ENCODE measurements at regions of chr5 and their contacts with region 1.

Region 1: DNA sequence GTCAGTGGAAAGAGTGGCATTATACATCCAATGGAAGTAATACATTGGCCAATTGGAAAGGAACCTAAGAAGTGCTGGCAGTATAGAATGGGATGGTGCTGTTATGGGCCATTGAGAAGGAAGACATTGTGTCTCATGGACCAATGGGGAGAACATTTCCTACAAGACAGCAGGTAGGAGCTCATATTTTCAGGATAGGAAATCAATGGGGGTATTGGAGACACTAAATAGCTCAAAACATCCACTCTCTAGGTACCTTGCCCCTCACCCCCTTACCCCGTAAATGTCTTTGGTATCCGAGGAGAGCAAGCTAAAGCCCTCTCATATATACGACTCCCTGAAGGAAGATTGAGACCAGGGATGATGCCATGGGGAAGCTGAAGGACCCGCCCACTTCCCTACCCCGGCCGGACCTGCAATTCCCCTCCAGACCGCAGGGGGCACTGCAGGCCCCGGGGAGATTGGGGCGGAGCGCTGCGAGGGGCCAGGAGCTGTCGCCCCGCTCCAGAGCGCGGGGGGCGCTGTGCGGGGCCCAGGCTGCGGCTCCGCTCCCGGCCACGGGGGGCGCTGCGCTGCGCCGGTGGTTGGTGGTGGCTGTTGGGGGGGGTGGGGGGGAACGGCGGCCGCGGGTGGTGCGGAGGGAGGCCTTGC is at the start of gene KDM3B:
- DNase-seq: peak; percentile 79
- H3K4me3 ChIP-seq: peak within 1 kb of the TSS; percentile 58 to 95 (median 78)
- H3K27ac ChIP-seq: peak within 1 kb of the TSS; percentile 65
- H3K4me1 ChIP-seq: peaks cover 14% of the 10 kb centered on the region
- H3K27me3 ChIP-seq: no peaks in the 10 kb centered on the region
- CTCF ChIP-seq: peak; percentile 99 to 100
- POLR2A ChIP-seq: peak; percentile 41
- total RNA-seq, gene KDM3B: 52.6 and 55.7 TPM in 2 replicates

Region 2: DNA sequence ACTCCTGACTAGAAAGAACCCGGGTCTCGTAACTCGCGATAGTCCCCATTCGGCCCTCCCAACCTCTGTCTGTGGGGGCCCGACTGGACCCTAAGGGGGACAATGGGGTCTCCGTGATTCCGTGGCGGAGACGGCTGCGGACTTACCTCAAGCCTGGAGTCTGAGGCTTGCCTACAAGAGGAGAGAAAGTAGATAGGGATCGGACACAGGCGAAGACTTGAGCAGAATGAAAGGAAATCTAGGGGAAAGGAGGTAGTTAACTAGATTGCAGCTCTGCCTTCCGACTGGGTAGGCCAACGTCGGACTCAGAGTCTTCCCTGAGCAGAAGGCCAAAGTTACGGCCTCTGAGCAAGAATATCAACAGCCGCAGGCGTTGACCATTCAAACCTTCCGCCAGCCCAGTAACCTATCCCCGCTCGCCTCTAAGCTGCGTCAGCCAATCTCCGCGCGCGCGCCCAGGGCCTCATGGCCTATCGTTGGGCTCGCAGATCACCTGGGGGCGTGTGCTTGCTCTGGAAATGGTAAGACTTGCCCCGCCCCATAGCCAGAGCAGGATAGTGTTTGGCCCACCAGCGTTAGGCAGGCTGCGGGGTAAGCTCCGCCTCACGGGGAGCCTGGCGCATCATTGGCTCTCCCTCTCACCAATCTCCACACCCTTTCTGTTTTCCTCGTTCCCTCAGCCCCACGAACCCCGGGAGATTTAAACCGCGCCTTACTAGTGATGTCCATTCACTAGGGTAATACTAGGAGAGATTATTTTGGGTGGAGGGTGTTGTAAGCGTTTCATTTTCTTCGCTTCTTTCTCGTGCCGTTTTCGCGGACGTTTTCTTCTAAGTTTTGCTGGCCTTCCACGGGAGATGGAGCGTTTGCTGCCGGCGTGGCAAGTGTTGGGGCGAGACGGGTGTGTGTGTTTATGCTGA is 20.5 kb before region 1 on chr5 and contains the start of gene CDC25C:
- CTCF ChIA-PET with region 1: interaction called, 64 read pairs
- POLR2A ChIA-PET with region 1: interaction called, 4 read pairs
- dilution Hi-C with region 1: no loop called
- intact Hi-C with region 1: no loop called
- DNase-seq: peak; percentile 100
- H3K4me3 ChIP-seq: peak within 1 kb of the TSS; percentile 55 to 86 (median 79)
- H3K27ac ChIP-seq: peak within 1 kb of the TSS; percentile 4
- H3K4me1 ChIP-seq: peaks cover 9% of the 10 kb centered on the region
- H3K27me3 ChIP-seq: no peaks in the 10 kb centered on the region
- CTCF ChIP-seq: no peak
- POLR2A ChIP-seq: peak; percentile 80
- total RNA-seq, gene CDC25C: 13.3 and 13.6 TPM in 2 replicates

Region 3: GRCh38 chr5:138337685-138338410 is 14.3 kb before region 1 on chr5 and contains the start of gene FAM53C:
- CTCF ChIA-PET with region 1: interaction called, 64 read pairs
- POLR2A ChIA-PET with region 1: interaction called, 58 read pairs
- dilution Hi-C with region 1: no loop called
- intact Hi-C with region 1: loop called (anchors 1 kb)
- DNase-seq: peak; percentile 95
- H3K4me3 ChIP-seq: peak within 1 kb of the TSS; percentile 26 to 84 (median 62)
- H3K27ac ChIP-seq: peak within 1 kb of the TSS; percentile 81
- H3K4me1 ChIP-seq: peaks cover 13% of the 10 kb centered on the region
- H3K27me3 ChIP-seq: no peaks in the 10 kb centered on the region
- CTCF ChIP-seq: no peak
- POLR2A ChIP-seq: peak; percentile 100
- total RNA-seq, gene FAM53C: 34.2 and 37.4 TPM in 2 replicates

Region 4: DNA sequence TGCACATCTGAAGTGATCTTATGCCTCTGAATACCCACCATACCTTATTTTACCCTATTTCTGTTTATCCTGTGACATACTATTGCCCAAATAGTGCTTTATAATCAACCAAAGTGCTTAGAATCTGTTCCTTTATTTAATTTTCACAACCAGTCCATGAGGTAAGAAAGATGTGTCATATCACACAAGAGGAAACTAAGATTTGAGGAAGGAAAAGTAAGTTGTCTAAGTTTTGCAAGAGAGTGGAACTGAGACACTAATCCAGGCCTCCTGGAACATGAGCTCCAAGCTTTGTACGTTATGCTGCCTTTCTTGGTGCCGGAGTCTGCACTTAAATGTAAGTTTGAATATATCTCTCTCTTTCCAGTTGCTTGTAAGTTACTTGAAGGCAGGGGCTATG is 17.5 kb after region 1 on chr5:
- CTCF ChIA-PET with region 1: interaction called, 71 read pairs
- POLR2A ChIA-PET with region 1: interaction called, 8 read pairs
- dilution Hi-C with region 1: no loop called
- intact Hi-C with region 1: loop called (anchors 2 kb)
- DNase-seq: peak; percentile 20
- H3K4me3 ChIP-seq: no peak overlapping the region
- H3K27ac ChIP-seq: peak overlapping the region; percentile 39
- H3K4me1 ChIP-seq: peaks cover 20% of the 10 kb centered on the region
- H3K27me3 ChIP-seq: no peaks in the 10 kb centered on the region
- CTCF ChIP-seq: no peak
- POLR2A ChIP-seq: no peak

Region 5: DNA sequence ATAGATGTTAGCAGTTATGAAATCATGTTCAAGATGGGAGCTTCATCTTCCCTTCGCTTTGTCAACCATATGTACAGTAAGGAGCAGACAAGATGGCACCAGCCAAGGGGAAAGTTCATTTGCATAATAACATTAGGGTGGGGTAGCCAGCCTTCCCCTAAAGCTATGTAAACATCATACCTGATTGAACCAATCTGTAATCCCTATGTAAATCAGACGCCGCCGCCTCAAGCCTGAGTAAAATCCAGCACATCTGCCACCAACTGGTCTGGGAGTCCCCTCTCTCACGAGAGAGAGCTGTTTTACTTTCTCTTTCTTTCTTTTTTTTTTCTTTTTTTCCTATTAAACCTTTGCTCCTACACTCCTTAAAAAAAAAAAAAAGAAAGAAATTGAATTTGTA is 55.8 kb after region 1 on chr5:
- CTCF ChIA-PET with region 1: interaction called, 19 read pairs
- POLR2A ChIA-PET with region 1: no interaction called
- dilution Hi-C with region 1: no loop called
- intact Hi-C with region 1: no loop called
- DNase-seq: no peak
- H3K4me3 ChIP-seq: no peak overlapping the region
- H3K27ac ChIP-seq: no peak overlapping the region
- H3K4me1 ChIP-seq: no peaks in the 10 kb centered on the region
- H3K27me3 ChIP-seq: no peaks in the 10 kb centered on the region
- CTCF ChIP-seq: no peak
- POLR2A ChIP-seq: no peak

Region 6: DNA sequence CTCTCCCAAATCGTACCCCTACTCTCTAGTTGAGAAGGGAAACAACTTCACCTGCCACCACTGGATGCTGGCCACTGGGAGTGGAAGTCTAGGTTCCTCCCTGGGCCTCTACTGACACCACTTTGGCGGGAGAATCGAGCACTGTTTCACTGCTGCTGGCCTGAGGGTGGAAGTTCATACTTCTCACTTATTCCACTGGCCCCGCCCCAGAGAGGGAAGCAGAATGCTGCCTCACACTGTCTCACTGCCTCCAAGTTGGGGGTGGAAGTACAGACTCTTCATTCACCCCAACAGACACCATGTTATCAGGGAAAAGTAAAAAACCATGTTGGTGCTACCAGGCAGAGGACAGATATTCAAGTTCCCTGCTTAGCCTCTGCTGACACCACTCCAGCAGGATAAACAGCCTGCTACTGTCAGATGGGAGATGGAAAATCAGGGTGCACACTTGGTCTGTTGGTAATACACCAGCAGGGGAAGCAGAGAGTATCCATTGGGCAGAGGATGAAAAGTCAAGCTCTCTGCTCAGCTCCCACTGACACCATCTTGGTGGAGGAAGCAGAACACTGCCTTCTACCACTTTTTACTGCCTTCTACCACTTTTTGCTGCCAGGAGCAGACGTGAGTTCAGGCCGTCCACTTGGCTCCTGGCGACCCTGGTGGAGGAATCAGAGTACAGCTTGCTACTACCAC is 686.6 kb after region 1 on chr5:
- CTCF ChIA-PET with region 1: no interaction called
- POLR2A ChIA-PET with region 1: no interaction called
- dilution Hi-C with region 1: no loop called
- intact Hi-C with region 1: loop called (anchors 5 kb)
- DNase-seq: no peak
- H3K4me3 ChIP-seq: no peak overlapping the region
- H3K27ac ChIP-seq: no peak overlapping the region
- H3K4me1 ChIP-seq: no peaks in the 10 kb centered on the region
- H3K27me3 ChIP-seq: no peaks in the 10 kb centered on the region
- CTCF ChIP-seq: peak in 1 of 2 donors; percentile 7
- POLR2A ChIP-seq: no peak